IMR-90 (cell line): ENCODE measurements at regions of chr2 and their contacts with region 1.

Region 1: GRCh38 chr2:33134086-33134771 is 187.5 kb downstream of the LTBP1 start:
- DNase-seq: peak; percentile 99
- ATAC-seq: peak; percentile 79
- H3K4me3 ChIP-seq: peak overlapping the region; percentile 74
- H3K27ac ChIP-seq: peak overlapping the region; percentile 92
- H3K4me1 ChIP-seq: peaks cover 20% of the 10 kb centered on the region
- H3K27me3 ChIP-seq: no peaks in the 10 kb centered on the region
- CTCF ChIP-seq: peak; percentile 30; the same call in 1 of the 2 replicates
- POLR2A ChIP-seq: peak; percentile 93
- RAD21 ChIP-seq: no peak; the same call in none of the 2 replicates

Region 2: GRCh38 chr2:31853521-31853920 is 1280.7 kb before region 1 on chr2:
- CTCF ChIA-PET with region 1: no interaction called
- POLR2A ChIA-PET with region 1: no interaction called
- dilution Hi-C with region 1: no loop called
- in situ Hi-C with region 1: no loop called
- intact Hi-C with region 1: no loop called
- DNase-seq: no peak
- ATAC-seq: no peak
- H3K4me3 ChIP-seq: no peak overlapping the region
- H3K27ac ChIP-seq: no peak overlapping the region
- H3K4me1 ChIP-seq: no peaks in the 10 kb centered on the region
- H3K27me3 ChIP-seq: no peaks in the 10 kb centered on the region
- CTCF ChIP-seq: no peak
- POLR2A ChIP-seq: no peak
- RAD21 ChIP-seq: no peak

Region 3: DNA sequence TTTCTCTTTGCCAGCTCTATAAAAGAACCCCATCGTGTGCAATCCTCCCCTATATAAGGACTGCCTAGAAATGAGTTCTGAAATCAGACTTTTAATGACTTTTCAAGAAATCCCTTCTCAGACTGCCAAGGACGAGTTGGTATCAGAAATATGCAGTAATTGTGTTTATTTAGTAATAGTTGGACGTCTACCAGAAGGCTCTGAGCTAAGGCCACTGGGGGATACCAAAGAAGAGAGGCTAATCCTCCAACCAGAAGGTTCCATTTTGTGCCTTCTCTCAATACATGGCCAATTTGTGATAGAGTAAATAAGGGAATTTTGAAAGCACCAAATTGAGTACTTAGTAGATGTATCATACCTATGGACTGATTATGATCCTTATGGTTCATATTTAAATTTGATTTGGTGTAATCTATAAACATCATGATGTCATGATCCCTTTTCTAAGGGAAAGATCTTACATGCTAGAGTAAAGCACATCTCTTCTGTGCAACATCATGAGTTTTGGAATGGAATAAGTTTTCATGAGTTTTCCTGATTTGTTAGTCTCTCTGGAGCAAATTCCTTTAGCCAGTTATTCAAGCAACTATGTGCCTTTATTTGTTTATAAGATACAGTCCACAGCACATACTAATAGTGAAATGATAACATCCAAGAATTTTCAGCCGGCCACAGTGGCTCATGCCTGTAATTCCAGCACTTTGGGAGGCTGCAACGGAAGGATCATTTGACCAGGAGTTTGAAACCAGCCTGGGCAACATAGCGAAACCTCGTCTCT is 269.7 kb before region 1 on chr2:
- CTCF ChIA-PET with region 1: no interaction called
- POLR2A ChIA-PET with region 1: no interaction called
- dilution Hi-C with region 1: no loop called
- in situ Hi-C with region 1: no loop called
- intact Hi-C with region 1: loop called (anchors 5 kb)
- DNase-seq: peak; percentile 93
- ATAC-seq: peak; percentile 90
- H3K4me3 ChIP-seq: no peak overlapping the region; the same call in 1 of the 2 replicates
- H3K27ac ChIP-seq: peak overlapping the region; percentile 94
- H3K4me1 ChIP-seq: peaks cover 16% of the 10 kb centered on the region
- H3K27me3 ChIP-seq: no peaks in the 10 kb centered on the region
- CTCF ChIP-seq: no peak
- POLR2A ChIP-seq: no peak
- RAD21 ChIP-seq: no peak

Region 4: GRCh38 chr2:33022989-33023727 is 111.1 kb before region 1 on chr2:
- CTCF ChIA-PET with region 1: no interaction called
- POLR2A ChIA-PET with region 1: no interaction called
- dilution Hi-C with region 1: no loop called
- in situ Hi-C with region 1: no loop called
- intact Hi-C with region 1: loop called (anchors 5 kb)
- DNase-seq: peak; percentile 95
- ATAC-seq: peak; percentile 88
- H3K4me3 ChIP-seq: no peak overlapping the region
- H3K27ac ChIP-seq: peak overlapping the region; percentile 96
- H3K4me1 ChIP-seq: peaks cover 15% of the 10 kb centered on the region
- H3K27me3 ChIP-seq: no peaks in the 10 kb centered on the region
- CTCF ChIP-seq: no peak
- POLR2A ChIP-seq: no peak
- RAD21 ChIP-seq: no peak; the same call in 1 of the 2 replicates

Region 5: DNA sequence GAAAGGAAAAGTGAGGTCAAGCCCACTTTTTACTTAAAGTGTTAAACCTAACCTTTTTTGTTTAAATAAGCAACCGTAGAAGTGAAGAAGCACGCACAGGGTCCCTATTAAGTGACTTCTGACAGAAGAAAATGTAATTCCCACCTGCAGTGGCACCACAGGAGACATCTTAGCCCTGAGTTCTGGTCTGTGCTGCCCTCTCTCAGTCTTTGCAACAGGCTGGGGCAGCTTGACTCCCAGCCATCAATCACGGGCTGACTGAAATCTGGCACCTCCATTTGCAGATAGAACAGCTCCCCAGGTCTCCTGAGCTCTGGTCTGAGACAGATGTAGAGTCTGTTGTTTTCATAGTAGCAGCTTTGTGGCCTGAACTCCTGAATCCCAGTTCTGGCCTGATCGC is 17.4 kb before region 1 on chr2:
- CTCF ChIA-PET with region 1: no interaction called
- POLR2A ChIA-PET with region 1: no interaction called
- dilution Hi-C with region 1: no loop called
- in situ Hi-C with region 1: no loop called
- intact Hi-C with region 1: no loop called
- DNase-seq: no peak
- ATAC-seq: no peak
- H3K4me3 ChIP-seq: no peak overlapping the region
- H3K27ac ChIP-seq: no peak overlapping the region
- H3K4me1 ChIP-seq: peaks cover 3% of the 10 kb centered on the region; the same call in 1 of the 2 replicates
- H3K27me3 ChIP-seq: no peaks in the 10 kb centered on the region
- CTCF ChIP-seq: no peak
- POLR2A ChIP-seq: no peak
- RAD21 ChIP-seq: no peak

Region 6: GRCh38 chr2:33166287-33166881 is 32.2 kb after region 1 on chr2:
- CTCF ChIA-PET with region 1: no interaction called
- POLR2A ChIA-PET with region 1: no interaction called
- dilution Hi-C with region 1: no loop called
- in situ Hi-C with region 1: no loop called
- intact Hi-C with region 1: loop called (anchors 1 kb)
- DNase-seq: peak; percentile 73
- ATAC-seq: peak; percentile 52
- H3K4me3 ChIP-seq: no peak overlapping the region
- H3K27ac ChIP-seq: peak overlapping the region; percentile 50; the same call in 1 of the 2 replicates
- H3K4me1 ChIP-seq: peaks cover 18% of the 10 kb centered on the region
- H3K27me3 ChIP-seq: no peaks in the 10 kb centered on the region
- CTCF ChIP-seq: no peak
- POLR2A ChIP-seq: no peak
- RAD21 ChIP-seq: no peak

Region 7: GRCh38 chr2:33441235-33441810 is 307.1 kb after region 1 on chr2:
- CTCF ChIA-PET with region 1: no interaction called
- POLR2A ChIA-PET with region 1: no interaction called
- dilution Hi-C with region 1: no loop called
- in situ Hi-C with region 1: no loop called
- intact Hi-C with region 1: loop called (anchors 10 kb)
- DNase-seq: peak; percentile 78
- ATAC-seq: peak; percentile 80
- H3K4me3 ChIP-seq: no peak overlapping the region
- H3K27ac ChIP-seq: no peak overlapping the region
- H3K4me1 ChIP-seq: peaks cover 6% of the 10 kb centered on the region; the same call in 1 of the 2 replicates
- H3K27me3 ChIP-seq: no peaks in the 10 kb centered on the region
- CTCF ChIP-seq: peak; percentile 90
- POLR2A ChIP-seq: no peak
- RAD21 ChIP-seq: peak; percentile 95